Posterior vena cava (tissue), 2 donors: ENCODE measurements at regions of chr4 and their contacts with region 1.

Region 1: DNA sequence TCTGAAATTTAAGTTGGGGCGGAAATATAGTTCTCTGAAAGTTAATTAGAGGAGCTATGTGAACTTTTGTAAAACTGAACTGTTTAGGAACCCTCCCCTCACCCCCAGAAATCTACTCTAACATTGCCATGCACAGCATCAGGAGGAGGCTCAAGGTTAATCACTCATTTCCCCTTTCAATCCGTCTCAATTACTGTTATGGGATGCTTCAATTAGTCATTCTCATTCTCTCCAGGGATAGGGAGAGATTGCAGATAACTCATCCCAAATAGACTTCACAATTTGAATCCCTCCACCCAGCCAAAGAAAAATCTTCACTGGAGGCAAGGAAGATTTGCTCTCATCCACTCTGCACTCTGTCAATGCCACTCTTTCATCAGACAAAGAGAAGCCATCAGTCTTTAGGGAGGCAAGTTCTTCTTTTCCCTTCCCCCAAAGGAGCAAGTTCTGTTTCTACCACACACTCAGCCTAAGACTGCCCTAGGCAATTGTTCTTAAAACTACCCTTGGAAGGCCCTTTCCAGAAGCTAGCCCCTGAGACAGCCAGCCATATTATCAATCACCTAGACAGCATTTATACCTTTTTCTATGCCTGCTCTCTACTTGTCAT is 140.4 kb downstream of the SLC10A7 start:
- DNase-seq: no peak

Region 2: GRCh38 chr4:146222313-146222712 is 159.1 kb before region 1 on chr4:
- intact Hi-C with region 1: no loop called
- DNase-seq: no peak

Region 3: DNA sequence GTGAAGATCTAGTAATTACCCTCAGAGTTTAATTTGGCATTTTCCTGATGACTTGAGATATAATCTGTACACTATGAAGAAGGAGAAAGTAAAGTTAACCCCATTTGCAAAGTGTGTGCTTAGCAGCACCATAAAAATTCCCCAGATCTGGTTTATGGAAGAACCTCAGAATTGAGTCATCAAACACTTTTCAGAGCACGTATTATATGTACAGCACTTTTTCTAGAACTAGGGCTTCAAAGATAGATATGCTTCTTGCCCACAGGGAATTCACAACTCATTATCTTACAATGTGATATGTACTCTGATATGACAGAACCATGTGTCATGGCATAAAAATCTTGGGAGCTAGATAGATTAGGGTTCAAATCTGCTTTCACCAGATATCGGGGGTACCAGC is 10.5 kb before region 1 on chr4:
- intact Hi-C with region 1: loop called in 1 of 2 experiments (anchors 1 kb)
- DNase-seq: no peak